CD8-positive, alpha-beta memory T cell (primary cell): ENCODE measurements at regions of chr11 and their contacts with region 1.

Region 1: GRCh38 chr11:73218106-73218829 is at the start of gene P2RY2:
- DNase-seq: no peak
- H3K4me3 ChIP-seq: no peak within 1 kb of the TSS
- H3K4me3 Mint-ChIP-seq: peak within 1 kb of the TSS in 6 of 7 donors; percentile 11 to 82 (median 62)
- H3K27ac ChIP-seq: no peak within 1 kb of the TSS
- H3K27ac Mint-ChIP-seq: no peak within 1 kb of the TSS
- H3K4me1 ChIP-seq: no peaks in the 10 kb centered on the region
- H3K4me1 Mint-ChIP-seq: peaks cover 0 to 15% (median 9%) of the 10 kb centered on the region in 3 donors
- H3K27me3 ChIP-seq: no peaks in the 10 kb centered on the region
- H3K27me3 Mint-ChIP-seq: peaks cover 23 to 25% of the 10 kb centered on the region in 2 donors
- total RNA-seq, gene P2RY2: not detected

Region 2: GRCh38 chr11:71913756-71914526 is 1304.3 kb before region 1 on chr11:
- CTCF ChIA-PET with region 1: no interaction called
- POLR2A ChIA-PET with region 1: interaction called, 10 read pairs
- DNase-seq: no peak
- H3K4me3 ChIP-seq: no peak overlapping the region
- H3K4me3 Mint-ChIP-seq: no peak overlapping the region
- H3K27ac ChIP-seq: no peak overlapping the region
- H3K27ac Mint-ChIP-seq: no peak overlapping the region
- H3K4me1 ChIP-seq: no peaks in the 10 kb centered on the region
- H3K4me1 Mint-ChIP-seq: no peaks in the 10 kb centered on the region
- H3K27me3 ChIP-seq: no peaks in the 10 kb centered on the region
- H3K27me3 Mint-ChIP-seq: no peaks in the 10 kb centered on the region

Region 3: GRCh38 chr11:72962084-72962483 is 256.2 kb before region 1 on chr11:
- CTCF ChIA-PET with region 1: no interaction called
- POLR2A ChIA-PET with region 1: no interaction called
- DNase-seq: no peak
- H3K4me3 ChIP-seq: no peak overlapping the region
- H3K4me3 Mint-ChIP-seq: no peak overlapping the region
- H3K27ac ChIP-seq: no peak overlapping the region
- H3K27ac Mint-ChIP-seq: no peak overlapping the region
- H3K4me1 ChIP-seq: no peaks in the 10 kb centered on the region
- H3K4me1 Mint-ChIP-seq: peaks cover 0 to 5% (median 3%) of the 10 kb centered on the region in 3 donors
- H3K27me3 ChIP-seq: no peaks in the 10 kb centered on the region
- H3K27me3 Mint-ChIP-seq: peaks cover 0 to 1% of the 10 kb centered on the region in 2 donors